K562 (cell line): ENCODE measurements at regions of chr7 and their contacts with region 1.

Region 1: GRCh38 chr7:132709971-132710567 is 133.8 kb upstream of the PLXNA4 start:
- DNase-seq: peak; percentile 36 to 49 (median 42)
- ATAC-seq: peak; percentile 84
- H3K4me3 ChIP-seq: no peak overlapping the region
- H3K27ac ChIP-seq: no peak overlapping the region
- H3K4me1 ChIP-seq: no peaks in the 10 kb centered on the region
- H3K27me3 ChIP-seq: peaks cover 33 to 42% of the 10 kb centered on the region in 2 experiments
- CTCF ChIP-seq: peak; percentile 59 to 70 (median 67); a peak in 5 of 6 replicates
- EP300 ChIP-seq: no peak
- POLR2A ChIP-seq: no peak
- RAD21 ChIP-seq: peak; percentile 52 to 73

Region 2: DNA sequence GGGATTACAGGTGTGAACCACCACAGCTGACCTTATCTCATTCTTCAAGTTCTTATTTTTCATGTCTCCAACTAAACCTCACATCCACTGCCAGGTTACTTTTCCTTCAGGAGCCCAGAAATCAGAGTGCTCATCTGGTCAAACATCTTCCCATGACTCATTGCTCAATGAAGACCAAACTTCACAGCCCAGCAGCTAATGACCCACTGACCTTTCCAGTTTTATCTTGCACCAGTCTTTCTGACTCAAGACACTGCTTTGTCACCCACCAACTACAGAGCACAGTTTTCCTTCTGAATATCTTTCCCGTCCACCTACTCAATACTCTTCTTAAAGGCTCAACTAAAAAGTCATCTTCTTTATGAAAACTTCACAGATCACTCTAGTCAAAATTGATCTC is 126.7 kb after region 1 on chr7:
- CTCF ChIA-PET with region 1: no interaction called
- POLR2A ChIA-PET with region 1: no interaction called
- in situ Hi-C with region 1: no loop called
- intact Hi-C with region 1: no loop called
- DNase-seq: peak in 3 of 4 experiments; percentile 16 to 49 (median 23)
- ATAC-seq: peak; percentile 67
- H3K4me3 ChIP-seq: no peak overlapping the region
- H3K27ac ChIP-seq: no peak overlapping the region
- H3K4me1 ChIP-seq: no peaks in the 10 kb centered on the region
- H3K27me3 ChIP-seq: no peaks in the 10 kb centered on the region
- CTCF ChIP-seq: no peak
- EP300 ChIP-seq: no peak
- POLR2A ChIP-seq: no peak
- RAD21 ChIP-seq: no peak

Region 3: GRCh38 chr7:133121175-133121844 is 411.2 kb after region 1 on chr7:
- CTCF ChIA-PET with region 1: no interaction called
- POLR2A ChIA-PET with region 1: no interaction called
- in situ Hi-C with region 1: no loop called
- intact Hi-C with region 1: loop called (anchors 10 kb)
- DNase-seq: peak in 2 of 4 experiments; percentile 32 to 38
- ATAC-seq: peak; percentile 65
- H3K4me3 ChIP-seq: no peak overlapping the region
- H3K27ac ChIP-seq: no peak overlapping the region
- H3K4me1 ChIP-seq: peaks cover 0 to 16% of the 10 kb centered on the region in 2 experiments; a peak in 3 of 5 replicates
- H3K27me3 ChIP-seq: peaks cover 24% of the 10 kb centered on the region in 2 experiments
- CTCF ChIP-seq: no peak
- EP300 ChIP-seq: peak; percentile 54; the same call in 1 of the 2 replicates
- POLR2A ChIP-seq: no peak
- RAD21 ChIP-seq: no peak

Region 4: DNA sequence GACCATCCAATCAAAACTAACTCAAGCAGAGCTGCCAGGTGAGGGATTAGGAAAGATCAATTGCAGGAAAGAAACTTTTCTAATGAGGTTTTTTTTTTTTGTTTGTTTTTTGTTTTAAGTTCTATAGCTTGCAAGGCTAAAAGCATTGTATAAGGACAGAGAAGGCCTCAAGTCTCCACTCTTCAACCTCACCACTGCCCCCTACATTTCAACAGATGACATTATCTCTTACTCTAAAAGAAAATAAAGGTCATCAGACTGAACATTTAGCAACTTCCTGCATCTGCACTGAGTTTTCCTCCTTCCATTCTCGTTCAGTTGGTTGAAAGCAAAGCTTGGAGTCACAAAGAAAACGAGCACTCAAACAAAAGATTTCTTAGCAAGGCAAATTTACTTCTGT is 497.6 kb after region 1 on chr7:
- CTCF ChIA-PET with region 1: no interaction called
- POLR2A ChIA-PET with region 1: no interaction called
- in situ Hi-C with region 1: no loop called
- intact Hi-C with region 1: loop called (anchors 1 kb)
- DNase-seq: peak; percentile 40 to 60 (median 47)
- ATAC-seq: peak; percentile 92
- H3K4me3 ChIP-seq: no peak overlapping the region
- H3K27ac ChIP-seq: no peak overlapping the region
- H3K4me1 ChIP-seq: no peaks in the 10 kb centered on the region
- H3K27me3 ChIP-seq: peaks cover 0 to 19% of the 10 kb centered on the region in 2 experiments; a peak in 3 of 5 replicates
- CTCF ChIP-seq: peak; percentile 54 to 66 (median 63); a peak in 5 of 6 replicates
- EP300 ChIP-seq: no peak
- POLR2A ChIP-seq: no peak
- RAD21 ChIP-seq: peak in 1 of 2 experiments; percentile 66; a peak in 3 of 4 replicates

Region 5: GRCh38 chr7:133230591-133231194 is 520.6 kb after region 1 on chr7:
- CTCF ChIA-PET with region 1: interaction called, 4 read pairs
- POLR2A ChIA-PET with region 1: no interaction called
- in situ Hi-C with region 1: no loop called
- intact Hi-C with region 1: loop called (anchors 5 kb)
- DNase-seq: peak; percentile 65 to 81 (median 76)
- ATAC-seq: peak; percentile 86
- H3K4me3 ChIP-seq: no peak overlapping the region
- H3K27ac ChIP-seq: no peak overlapping the region
- H3K4me1 ChIP-seq: no peaks in the 10 kb centered on the region
- H3K27me3 ChIP-seq: peaks cover 24 to 35% of the 10 kb centered on the region in 2 experiments
- CTCF ChIP-seq: peak; percentile 67 to 90 (median 85)
- EP300 ChIP-seq: no peak
- POLR2A ChIP-seq: no peak
- RAD21 ChIP-seq: peak; percentile 52 to 77

Region 6: GRCh38 chr7:133344275-133344674 is 634.2 kb after region 1 on chr7:
- CTCF ChIA-PET with region 1: no interaction called
- POLR2A ChIA-PET with region 1: no interaction called
- in situ Hi-C with region 1: no loop called
- intact Hi-C with region 1: loop called (anchors 2 kb)
- DNase-seq: peak in 3 of 4 experiments; percentile 14 to 32 (median 23)
- ATAC-seq: peak; percentile 56; the same call in 1 of the 3 replicates
- H3K4me3 ChIP-seq: no peak overlapping the region
- H3K27ac ChIP-seq: no peak overlapping the region
- H3K4me1 ChIP-seq: no peaks in the 10 kb centered on the region
- H3K27me3 ChIP-seq: no peaks in the 10 kb centered on the region
- CTCF ChIP-seq: peak; percentile 8 to 65 (median 62); a peak in 5 of 6 replicates
- EP300 ChIP-seq: no peak
- POLR2A ChIP-seq: no peak
- RAD21 ChIP-seq: peak in 1 of 2 experiments; percentile 56; a peak in 2 of 4 replicates